Right ventricle myocardium inferior (tissue), 1 donor: ENCODE measurements at regions of chr2 and their contacts with region 1.

Region 1: DNA sequence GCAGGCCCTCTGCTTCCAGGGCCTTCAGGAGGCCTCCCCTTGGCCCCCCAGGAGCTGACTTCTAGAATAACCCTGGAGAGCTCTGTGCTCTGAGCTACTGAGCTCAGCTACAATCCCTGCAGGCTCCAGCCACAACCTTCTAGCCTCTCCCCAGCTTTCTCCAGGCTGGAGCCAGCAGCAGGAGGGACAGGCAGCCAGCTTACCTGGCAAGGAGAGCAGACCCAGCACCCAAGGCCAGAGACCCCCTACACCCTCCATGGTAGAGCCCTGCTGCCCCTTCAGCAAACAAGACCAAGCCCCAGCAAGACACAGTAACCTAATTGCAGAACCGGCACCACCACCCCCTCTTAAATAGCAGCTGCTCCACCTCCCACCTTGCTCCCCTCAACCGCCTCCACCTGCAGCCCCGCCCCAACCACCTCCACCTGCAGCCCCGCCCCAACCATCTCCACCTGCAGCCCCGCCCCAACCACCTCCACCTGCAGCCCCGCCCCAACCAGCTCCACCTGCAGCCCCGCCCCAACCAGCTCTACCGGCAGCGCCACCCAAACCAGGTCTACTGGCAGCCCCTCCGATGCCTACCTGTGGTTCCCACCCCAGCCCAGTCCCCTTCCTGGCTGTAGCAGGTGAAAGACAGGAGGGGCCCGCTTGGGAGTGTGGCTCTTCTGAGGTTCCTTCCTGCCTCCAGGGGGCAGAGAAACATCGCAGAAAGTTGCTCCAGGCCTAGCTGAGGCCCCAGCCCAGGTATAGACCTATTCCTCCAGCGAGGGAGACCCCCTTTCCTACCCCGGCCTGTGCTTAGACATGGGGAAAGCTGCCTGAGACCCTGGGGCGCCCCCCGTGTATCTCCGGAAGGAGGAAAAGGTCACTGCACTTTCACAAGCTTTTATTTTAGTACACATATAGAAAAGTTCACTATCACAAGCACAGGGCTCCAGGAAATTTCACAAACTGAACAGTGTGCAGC is at the start of gene ASTL:
- DNase-seq: no peak
- ATAC-seq: peak; percentile 55
- total RNA-seq, gene ASTL: not detected

Region 2: DNA sequence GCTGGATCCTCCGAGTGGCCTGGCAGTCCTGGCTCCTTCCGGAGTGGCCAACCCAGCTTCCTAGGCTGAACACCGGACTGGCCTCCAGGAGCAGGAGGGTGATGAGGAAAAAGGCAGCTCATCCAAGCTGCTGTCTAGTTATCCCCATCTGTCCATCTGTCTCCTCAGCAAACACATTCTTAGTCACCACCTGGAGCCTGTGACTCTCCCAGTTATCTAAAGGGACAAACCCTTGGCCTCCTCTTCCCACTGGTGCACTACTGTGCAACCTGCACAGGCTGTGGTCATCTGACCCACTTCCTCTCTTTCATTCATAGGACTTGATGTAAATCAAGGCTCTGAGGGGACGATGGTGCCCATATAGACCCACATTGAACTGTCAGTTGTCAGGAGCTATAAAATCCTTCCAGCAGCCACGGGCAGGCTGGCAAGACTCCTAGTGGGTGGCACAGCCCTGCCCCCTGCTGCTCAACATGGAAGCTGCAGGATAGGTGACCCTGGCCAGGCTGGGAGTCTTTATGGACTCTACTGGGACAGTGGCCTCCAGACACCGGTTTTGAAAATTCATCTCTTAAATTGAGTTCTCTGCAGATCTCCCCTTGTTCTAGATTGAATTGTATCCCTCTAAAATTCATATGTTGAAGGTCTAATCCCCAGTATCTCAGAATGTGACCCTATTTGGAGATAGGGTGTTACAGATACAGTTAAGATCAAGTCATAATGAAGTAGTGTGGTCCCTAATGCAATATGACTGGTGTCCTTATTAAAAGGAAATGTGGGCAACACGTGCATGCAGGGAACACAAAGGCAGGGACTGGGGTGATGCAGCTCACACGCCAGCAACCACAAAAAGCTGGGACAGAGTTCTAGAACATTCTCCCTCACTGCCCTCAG is 36.0 kb after region 1 on chr2:
- intact Hi-C with region 1: loop called (anchors 1 kb)
- DNase-seq: peak; percentile 85
- ATAC-seq: peak; percentile 85